AG04449 (cell line): ENCODE measurements at regions of chr18 and their contacts with region 1.

Region 1: DNA sequence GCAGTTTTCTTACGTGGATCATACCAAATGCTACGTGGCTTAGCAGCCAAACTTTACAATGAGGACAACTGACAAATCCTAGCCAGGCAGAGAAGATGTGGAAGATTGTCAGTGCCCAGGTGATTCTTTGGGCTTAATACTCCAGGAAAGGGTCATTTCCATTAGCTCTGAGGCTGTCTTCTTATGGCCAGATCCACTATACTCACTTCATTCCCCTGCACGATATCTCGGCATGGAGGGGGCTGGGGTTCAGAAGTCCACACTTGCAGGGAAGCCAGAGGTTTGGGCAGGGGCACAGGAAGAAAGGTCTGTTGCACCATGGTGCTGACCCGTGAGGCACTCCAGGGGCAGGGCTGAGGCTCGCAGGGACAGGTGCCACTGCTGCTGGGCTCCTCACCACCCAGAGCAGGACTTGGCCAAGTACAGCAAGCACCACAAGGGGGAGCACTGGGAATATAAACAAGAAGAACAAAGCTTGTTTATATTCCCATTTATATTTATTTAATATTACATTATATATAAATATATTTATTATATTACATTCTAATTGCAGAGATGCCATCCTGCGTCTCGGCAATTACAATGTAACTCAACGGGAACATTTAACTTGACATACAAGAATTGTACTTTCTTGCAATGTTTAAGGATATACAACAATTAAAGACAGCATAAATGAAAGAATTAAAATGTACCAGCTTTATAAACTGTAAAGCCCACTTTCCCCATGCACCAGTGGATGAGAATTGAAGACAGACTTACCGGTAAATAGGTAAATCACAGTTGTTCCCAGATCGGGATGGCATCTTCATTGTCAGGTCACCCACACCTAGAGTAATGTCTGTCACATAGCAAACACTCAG is 27.2 kb downstream of the CLUL1 start:
- DNase-seq: peak; percentile 7
- H3K4me3 ChIP-seq: no peak overlapping the region
- CTCF ChIP-seq: peak; percentile 72

Region 2: GRCh38 chr18:293536-293935 is 330.5 kb before region 1 on chr18:
- CTCF ChIA-PET with region 1: interaction called, 242 read pairs
- POLR2A ChIA-PET with region 1: no interaction called
- DNase-seq: no peak
- H3K4me3 ChIP-seq: no peak overlapping the region
- CTCF ChIP-seq: no peak

Region 3: GRCh38 chr18:634551-635045 is 10.6 kb after region 1 on chr18:
- CTCF ChIA-PET with region 1: interaction called, 39 read pairs
- POLR2A ChIA-PET with region 1: no interaction called
- DNase-seq: no peak
- H3K4me3 ChIP-seq: no peak overlapping the region
- CTCF ChIP-seq: no peak

Region 4: DNA sequence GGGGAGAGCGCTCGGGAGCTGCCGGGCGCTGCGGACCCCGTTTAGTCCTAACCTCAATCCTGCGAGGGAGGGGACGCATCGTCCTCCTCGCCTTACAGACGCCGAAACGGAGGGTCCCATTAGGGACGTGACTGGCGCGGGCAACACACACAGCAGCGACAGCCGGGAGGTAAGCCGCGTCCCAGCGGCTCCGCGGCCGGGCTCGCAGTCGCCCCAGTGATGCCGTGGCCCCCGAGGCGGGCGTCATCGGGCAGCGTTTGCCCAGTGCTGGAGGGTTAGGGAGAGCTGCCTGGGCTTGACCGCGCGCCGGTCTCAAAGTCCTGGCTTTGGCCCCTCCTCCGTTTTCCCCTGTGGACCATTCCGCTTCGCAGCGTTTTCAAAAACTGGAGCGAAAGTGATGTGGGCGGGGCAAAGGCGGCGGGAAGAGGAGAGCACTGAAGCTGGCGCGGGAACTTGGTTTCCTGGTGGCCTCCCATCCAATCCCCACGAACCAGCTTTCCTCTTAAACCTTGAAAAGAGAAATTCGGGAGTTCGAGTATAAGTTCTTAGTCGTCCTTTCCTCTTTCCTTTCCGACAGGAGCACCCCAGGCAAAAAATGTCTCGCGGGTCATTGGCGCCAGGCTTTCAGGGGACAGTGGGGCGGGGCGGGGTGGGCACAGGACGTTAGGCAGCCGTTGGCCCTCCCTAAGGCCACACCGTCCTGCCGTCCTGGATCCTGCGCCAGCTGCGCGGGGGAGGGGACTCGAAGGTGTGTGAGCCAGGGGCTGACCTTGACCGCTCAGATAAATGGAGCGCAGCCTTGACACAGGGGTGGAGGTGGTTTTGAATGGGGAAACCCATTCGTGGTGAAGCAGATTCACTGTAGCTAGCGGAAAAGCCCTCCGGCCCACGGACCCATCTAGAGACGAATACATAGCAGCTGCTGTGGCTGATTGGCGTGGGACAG is 34.3 kb after region 1 on chr18:
- CTCF ChIA-PET with region 1: interaction called, 24 read pairs
- POLR2A ChIA-PET with region 1: no interaction called
- DNase-seq: no peak
- H3K4me3 ChIP-seq: peak overlapping the region; percentile 89
- CTCF ChIP-seq: no peak

Region 5: GRCh38 chr18:839224-840022 is 215.4 kb after region 1 on chr18:
- CTCF ChIA-PET with region 1: interaction called, 448 read pairs
- POLR2A ChIA-PET with region 1: no interaction called
- DNase-seq: no peak
- H3K4me3 ChIP-seq: no peak overlapping the region
- CTCF ChIP-seq: peak; percentile 97